Adrenal gland (tissue), 19 donors: ENCODE measurements at regions of chr2 and their contacts with region 1.

Region 1: GRCh38 chr2:9538000-9538507 is 17.6 kb downstream of the ADAM17 start:
- DNase-seq: no peak
- H3K4me3 ChIP-seq: peak overlapping the region in 1 of 4 donors; percentile 20
- H3K27ac ChIP-seq: peak overlapping the region; percentile 19 to 87 (median 70)
- H3K4me1 ChIP-seq: peaks cover 14 to 32% of the 10 kb centered on the region in 2 donors
- H3K27me3 ChIP-seq: no peaks in the 10 kb centered on the region
- CTCF ChIP-seq: no peak
- POLR2A ChIP-seq: no peak

Region 2: GRCh38 chr2:9474361-9474967 is 63.6 kb before region 1 on chr2 and contains the start of gene IAH1:
- intact Hi-C with region 1: loop called in 1 of 2 experiments (anchors 10 kb)
- DNase-seq: peak; percentile 55 to 80 (median 70)
- H3K4me3 ChIP-seq: peak within 1 kb of the TSS; percentile 19 to 73 (median 64)
- H3K27ac ChIP-seq: peak within 1 kb of the TSS; percentile 3 to 91 (median 82)
- H3K4me1 ChIP-seq: peaks cover 7 to 24% of the 10 kb centered on the region in 2 donors
- H3K27me3 ChIP-seq: no peaks in the 10 kb centered on the region
- CTCF ChIP-seq: no peak
- POLR2A ChIP-seq: peak; percentile 46 to 55
- total RNA-seq, gene IAH1: 61.9 to 203 (median 88.7) TPM

Region 3: DNA sequence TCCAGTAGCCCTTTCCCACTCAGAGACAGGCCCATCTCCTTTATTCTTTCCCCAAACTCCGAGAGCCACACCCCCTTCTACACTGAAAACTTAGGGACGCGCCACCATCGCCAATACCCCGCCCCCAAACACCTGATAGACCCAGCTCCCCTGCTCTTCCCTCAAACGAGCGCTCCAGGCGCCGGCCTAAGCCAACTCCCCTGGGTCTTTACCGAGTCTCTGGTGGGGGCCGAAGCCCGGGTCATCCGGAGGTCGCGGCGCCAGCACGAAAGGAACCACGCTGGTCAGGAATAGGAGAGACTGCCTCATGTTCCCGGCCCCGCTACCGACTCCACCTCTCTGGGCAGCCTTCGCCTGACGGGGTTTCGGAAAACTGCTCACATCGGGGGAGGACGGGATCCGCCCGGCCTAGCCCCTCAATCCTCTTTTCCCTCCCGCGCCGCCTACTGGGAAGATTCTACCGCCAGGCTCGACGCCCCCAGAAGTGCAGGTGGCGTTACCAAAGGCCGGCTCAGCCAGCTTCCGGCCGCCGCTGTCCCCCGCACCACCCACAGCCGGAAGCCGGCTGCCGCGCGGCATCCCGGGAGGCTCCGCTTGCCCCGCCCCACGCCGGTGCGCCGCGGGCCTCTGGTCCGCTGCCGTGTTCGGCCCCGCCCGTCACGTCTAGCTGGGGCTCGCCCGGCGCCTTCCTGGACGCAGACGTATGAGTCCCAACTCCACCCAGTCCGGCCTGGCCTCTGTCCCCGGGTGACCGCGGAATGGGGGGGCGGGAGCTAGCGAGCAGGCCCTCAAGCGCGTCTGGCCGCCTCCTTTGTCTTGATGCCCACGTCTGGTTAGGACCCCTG is 17.5 kb after region 1 on chr2 and contains the start of gene ADAM17:
- intact Hi-C with region 1: loop called in 1 of 2 experiments (anchors 2 kb)
- DNase-seq: peak; percentile 96 to 98 (median 97)
- H3K4me3 ChIP-seq: peak within 1 kb of the TSS; percentile 76 to 94 (median 83)
- H3K27ac ChIP-seq: peak within 1 kb of the TSS; percentile 96 to 99 (median 97)
- H3K4me1 ChIP-seq: peaks cover 32 to 58% of the 10 kb centered on the region in 2 donors
- H3K27me3 ChIP-seq: no peaks in the 10 kb centered on the region
- CTCF ChIP-seq: peak in 4 of 6 experiments; percentile 25 to 82 (median 68)
- POLR2A ChIP-seq: peak; percentile 82 to 98
- total RNA-seq, gene ADAM17: 14.5 to 39.4 (median 23.6) TPM